Activated T-helper 1 cell treated with anti-CD3 and anti-CD28 coated beads, Interleukin-12 subunit alpha, Interleukin-12 subunit beta, Interleukin-2, Interleukin-4 antibody, amounts not matched to agents 30 ng/mL and 10 ng/mL and 1 ng/mL, durations not matched to agents 14 hours and 24 hours and 36 hours (primary cell): ENCODE measurements at regions of chr7 and their contacts with region 1.

Region 1: GRCh38 chr7:8418629-8419245 is 14.7 kb upstream of the NXPH1 start:
- DNase-seq: no peak
- H3K4me3 Mint-ChIP-seq: no peak overlapping the region
- H3K27ac Mint-ChIP-seq: no peak overlapping the region
- H3K4me1 Mint-ChIP-seq: no peaks in the 10 kb centered on the region
- H3K27me3 Mint-ChIP-seq: peaks cover 7% of the 10 kb centered on the region

Region 2: DNA sequence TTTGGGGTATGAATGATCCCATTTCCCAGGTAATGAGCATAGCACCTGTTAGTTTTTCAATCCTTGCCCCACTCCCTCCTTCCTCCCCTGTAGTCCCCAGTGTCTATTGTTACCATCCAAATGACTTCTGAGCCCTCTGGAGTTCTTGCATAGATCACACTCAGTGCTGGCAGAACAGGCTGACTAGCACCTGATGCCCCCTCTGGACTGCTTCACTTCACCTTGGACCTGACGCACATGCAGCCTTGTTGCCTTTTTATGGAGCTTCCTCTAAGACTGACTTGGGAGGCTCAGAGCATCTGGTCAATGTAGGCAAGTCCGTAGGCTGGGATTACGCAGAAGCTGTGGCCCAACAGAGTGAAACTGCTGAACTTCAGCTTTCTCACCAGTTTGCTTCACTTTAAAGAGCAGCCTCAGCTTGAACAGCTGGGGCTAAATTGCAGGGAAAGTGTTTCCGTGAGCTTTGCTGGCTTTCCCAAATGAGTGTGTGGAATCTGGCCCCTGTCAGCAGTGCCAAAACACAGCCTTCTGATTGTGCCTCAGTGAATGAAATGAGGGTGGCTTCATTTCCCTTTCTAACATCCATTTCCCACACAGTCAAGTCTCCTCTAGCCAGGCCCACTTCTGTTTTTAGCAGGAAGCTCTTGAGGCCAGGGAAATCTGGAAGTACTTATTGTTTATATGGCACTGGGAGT is 63.2 kb after region 1 on chr7:
- intact Hi-C with region 1: no loop called
- DNase-seq: no peak
- H3K4me3 Mint-ChIP-seq: no peak overlapping the region
- H3K27ac Mint-ChIP-seq: no peak overlapping the region
- H3K4me1 Mint-ChIP-seq: no peaks in the 10 kb centered on the region
- H3K27me3 Mint-ChIP-seq: no peaks in the 10 kb centered on the region

Region 3: GRCh38 chr7:8724080-8724718 is 305.5 kb after region 1 on chr7:
- intact Hi-C with region 1: loop called (anchors 1 kb)
- DNase-seq: peak; percentile 1
- H3K4me3 Mint-ChIP-seq: no peak overlapping the region
- H3K27ac Mint-ChIP-seq: no peak overlapping the region
- H3K4me1 Mint-ChIP-seq: no peaks in the 10 kb centered on the region
- H3K27me3 Mint-ChIP-seq: no peaks in the 10 kb centered on the region